ENCODE measurements at regions of chr16 and their contacts with region 1.

Region 1: DNA sequence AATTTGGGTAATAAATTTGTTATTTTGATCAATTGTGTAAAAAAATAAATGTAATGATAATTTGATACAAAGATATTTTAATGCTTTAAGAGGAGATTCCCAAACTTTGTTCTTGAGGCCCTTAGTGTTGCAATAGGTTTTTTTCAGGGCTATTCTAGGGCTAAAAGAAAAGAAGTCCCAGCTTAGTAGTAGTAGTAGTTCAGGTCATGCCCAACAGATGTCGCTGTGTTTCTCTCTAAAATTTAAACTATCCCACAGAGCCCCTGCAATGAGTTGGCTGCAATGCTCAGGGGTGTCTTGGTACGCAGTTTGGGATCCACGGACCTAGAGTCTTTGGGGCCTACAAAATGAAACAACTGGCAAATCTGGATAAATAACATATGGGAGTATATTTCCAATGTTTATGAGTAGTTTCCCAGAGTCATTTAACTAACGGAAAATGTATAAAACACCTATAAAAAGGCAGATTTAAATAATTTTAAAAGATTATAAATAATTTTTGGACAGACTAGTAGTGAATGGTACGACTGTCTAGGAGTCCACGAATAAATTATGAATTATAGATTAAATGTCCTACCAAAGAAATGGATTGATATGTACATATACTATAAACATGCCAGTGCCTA is 228.4 kb upstream of the PMFBP1 start:
- DNase-seq: peak; percentile 55
- H3K4me3 Mint-ChIP-seq: no peak overlapping the region
- H3K27ac Mint-ChIP-seq: no peak overlapping the region
- H3K4me1 Mint-ChIP-seq: no peaks in the 10 kb centered on the region
- H3K27me3 Mint-ChIP-seq: no peaks in the 10 kb centered on the region
- CTCF ChIP-seq: peak; percentile 71

Region 2: DNA sequence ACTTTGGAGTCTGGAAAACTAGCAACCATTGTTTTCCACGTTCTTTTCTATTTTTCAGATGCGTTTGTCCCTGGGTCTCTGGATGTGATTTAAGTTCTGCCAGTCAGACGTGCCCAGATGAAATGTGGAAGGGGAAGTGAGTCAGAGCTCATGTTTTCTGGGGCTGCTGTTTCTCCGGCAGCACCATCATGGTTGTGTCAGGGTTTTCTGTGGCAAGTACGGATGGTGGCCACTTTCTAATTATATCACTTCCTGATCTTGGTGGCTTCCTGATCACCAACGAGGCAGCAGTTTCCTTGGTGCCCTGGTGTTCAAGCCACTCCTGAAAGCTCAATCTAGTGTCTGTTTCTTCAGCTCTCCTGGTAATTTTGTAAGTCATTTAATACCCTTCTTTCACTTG is 197.0 kb before region 1 on chr16:
- CTCF ChIA-PET with region 1: no interaction called
- intact Hi-C with region 1: no loop called
- DNase-seq: no peak
- H3K4me3 Mint-ChIP-seq: no peak overlapping the region
- H3K27ac Mint-ChIP-seq: no peak overlapping the region
- H3K4me1 Mint-ChIP-seq: peaks cover 15% of the 10 kb centered on the region
- H3K27me3 Mint-ChIP-seq: no peaks in the 10 kb centered on the region
- CTCF ChIP-seq: no peak

Region 3: DNA sequence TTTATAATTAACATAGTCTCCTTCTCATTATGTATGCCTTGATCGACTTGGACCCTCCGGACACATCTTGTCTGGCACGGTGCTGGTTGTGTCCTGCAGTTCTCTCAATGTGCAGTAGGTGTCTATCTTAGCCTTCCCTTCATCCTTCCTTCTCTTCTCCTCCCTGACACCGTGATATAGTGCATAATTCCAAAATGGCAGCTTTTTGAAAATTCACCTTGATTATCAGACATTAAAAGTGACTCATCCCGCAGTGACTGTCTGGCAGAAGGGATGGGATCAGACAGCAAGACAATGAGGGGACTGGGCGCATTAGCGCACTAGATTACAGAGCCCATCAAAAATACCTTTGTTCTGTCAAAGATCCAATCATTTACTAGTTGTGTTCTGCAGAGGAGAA is 158.4 kb before region 1 on chr16:
- CTCF ChIA-PET with region 1: no interaction called
- intact Hi-C with region 1: loop called (anchors 5 kb)
- DNase-seq: peak; percentile 56
- H3K4me3 Mint-ChIP-seq: no peak overlapping the region
- H3K27ac Mint-ChIP-seq: no peak overlapping the region
- H3K4me1 Mint-ChIP-seq: no peaks in the 10 kb centered on the region
- H3K27me3 Mint-ChIP-seq: no peaks in the 10 kb centered on the region
- CTCF ChIP-seq: peak; percentile 77

Region 4: GRCh38 chr16:72332926-72333325 is 67.4 kb before region 1 on chr16:
- CTCF ChIA-PET with region 1: no interaction called
- intact Hi-C with region 1: no loop called
- DNase-seq: no peak
- H3K4me3 Mint-ChIP-seq: no peak overlapping the region
- H3K27ac Mint-ChIP-seq: no peak overlapping the region
- H3K4me1 Mint-ChIP-seq: no peaks in the 10 kb centered on the region
- H3K27me3 Mint-ChIP-seq: no peaks in the 10 kb centered on the region
- CTCF ChIP-seq: no peak